Activated CD4-positive, alpha-beta T cell treated with anti-CD3 and anti-CD28 coated beads for 36 hours (primary cell): ENCODE measurements at regions of chrX and their contacts with region 1.

Region 1: GRCh38 chrX:14029425-14030173 is at the start of gene GEMIN8:
- DNase-seq: peak; percentile 90
- ATAC-seq: peak; percentile 75
- H3K4me3 Mint-ChIP-seq: peak within 1 kb of the TSS; percentile 87
- H3K27ac Mint-ChIP-seq: peak within 1 kb of the TSS; percentile 100
- H3K4me1 Mint-ChIP-seq: peaks cover 40% of the 10 kb centered on the region
- H3K27me3 Mint-ChIP-seq: peaks cover 2% of the 10 kb centered on the region
- total RNA-seq, gene GEMIN8: 14.9 to 15.6 TPM

Region 2: GRCh38 chrX:12984629-12985319 is 1044.8 kb before region 1 on chrX:
- CTCF ChIA-PET with region 1: no interaction called
- POLR2A ChIA-PET with region 1: no interaction called
- intact Hi-C with region 1: loop called in 1 of 2 experiments (anchors 10 kb)
- DNase-seq: peak; percentile 65
- ATAC-seq: peak; percentile 84
- H3K4me3 Mint-ChIP-seq: peak overlapping the region; percentile 28
- H3K27ac Mint-ChIP-seq: peak overlapping the region; percentile 89
- H3K4me1 Mint-ChIP-seq: peaks cover 70% of the 10 kb centered on the region
- H3K27me3 Mint-ChIP-seq: no peaks in the 10 kb centered on the region

Region 3: GRCh38 chrX:13581554-13581953 is 448.0 kb before region 1 on chrX:
- CTCF ChIA-PET with region 1: no interaction called
- POLR2A ChIA-PET with region 1: no interaction called
- intact Hi-C with region 1: no loop called
- DNase-seq: no peak
- ATAC-seq: no peak
- H3K4me3 Mint-ChIP-seq: no peak overlapping the region
- H3K27ac Mint-ChIP-seq: no peak overlapping the region
- H3K4me1 Mint-ChIP-seq: no peaks in the 10 kb centered on the region
- H3K27me3 Mint-ChIP-seq: peaks cover 15% of the 10 kb centered on the region

Region 4: GRCh38 chrX:13658602-13659001 is 371.0 kb before region 1 on chrX:
- CTCF ChIA-PET with region 1: interaction called, 3 read pairs
- POLR2A ChIA-PET with region 1: no interaction called
- intact Hi-C with region 1: loop called (anchors 1 to 2 kb)
- DNase-seq: no peak
- ATAC-seq: no peak
- H3K4me3 Mint-ChIP-seq: no peak overlapping the region
- H3K27ac Mint-ChIP-seq: no peak overlapping the region
- H3K4me1 Mint-ChIP-seq: peaks cover 36% of the 10 kb centered on the region
- H3K27me3 Mint-ChIP-seq: no peaks in the 10 kb centered on the region

Region 5: DNA sequence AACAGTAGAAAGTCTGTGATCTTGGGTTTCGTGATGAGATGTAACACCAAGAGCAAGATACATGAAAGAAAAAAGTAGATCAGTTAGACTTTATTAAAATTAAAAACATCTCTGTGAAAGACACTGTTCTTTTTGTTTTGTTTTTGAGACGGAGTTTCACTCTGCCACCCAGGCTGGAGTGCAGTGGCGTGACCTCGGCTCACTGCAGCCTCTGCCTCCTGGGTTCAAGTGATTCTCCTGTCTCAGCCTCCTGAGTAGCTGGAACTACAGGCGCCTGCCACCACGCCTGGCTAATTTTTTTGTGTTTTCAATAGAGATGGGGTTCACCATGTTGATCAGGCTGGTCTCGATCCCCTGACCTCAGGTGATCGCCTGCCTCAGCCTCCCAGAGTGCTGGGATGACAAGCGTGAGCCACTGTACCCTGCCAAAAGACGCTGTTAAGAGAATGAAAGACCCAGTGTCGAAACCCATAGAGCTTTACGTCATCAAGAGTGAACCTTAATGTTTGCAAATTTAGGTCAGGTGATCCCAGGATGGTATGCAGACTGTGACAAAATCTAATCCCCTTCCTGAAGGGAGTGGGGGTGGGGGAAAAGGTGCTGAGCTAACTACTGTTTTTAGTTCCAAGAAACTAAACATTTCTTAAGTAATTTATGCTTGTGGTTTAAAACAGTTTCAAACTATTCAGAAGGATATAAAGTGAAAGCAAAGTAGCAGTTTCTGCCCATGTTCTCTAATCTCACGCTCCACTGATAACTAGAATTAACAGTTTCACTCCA is 287.0 kb before region 1 on chrX:
- CTCF ChIA-PET with region 1: interaction called, 4 read pairs
- POLR2A ChIA-PET with region 1: no interaction called
- intact Hi-C with region 1: loop called in 1 of 2 experiments (anchors 2 kb)
- DNase-seq: peak; percentile 69
- ATAC-seq: peak; percentile 93
- H3K4me3 Mint-ChIP-seq: peak overlapping the region; percentile 43
- H3K27ac Mint-ChIP-seq: peak overlapping the region; percentile 34
- H3K4me1 Mint-ChIP-seq: peaks cover 18% of the 10 kb centered on the region
- H3K27me3 Mint-ChIP-seq: no peaks in the 10 kb centered on the region

Region 6: DNA sequence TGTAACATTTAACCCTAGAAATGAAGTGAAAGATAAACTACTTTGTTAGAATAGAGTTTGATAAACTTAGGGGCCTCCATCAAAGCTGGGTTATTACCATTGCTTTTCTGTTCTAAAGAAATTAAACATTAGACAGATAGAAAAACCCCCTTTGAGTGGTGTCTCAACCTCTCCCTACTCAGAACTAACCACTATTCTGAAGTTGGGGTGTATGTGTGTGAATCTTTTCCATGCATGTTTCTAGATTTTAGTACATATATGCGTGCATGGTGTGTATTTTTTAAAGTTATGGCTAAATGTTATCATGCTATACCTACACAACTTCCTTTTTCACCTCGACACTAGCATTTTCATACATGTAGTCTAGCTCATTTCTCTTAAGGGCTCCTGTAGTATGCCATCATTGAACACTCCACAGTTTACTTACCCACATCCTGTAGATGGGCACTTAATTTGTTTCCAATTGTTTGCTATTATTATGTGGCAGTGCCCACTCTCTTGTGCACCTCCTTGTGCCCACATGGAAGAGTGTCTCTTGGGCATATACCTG is 25.6 kb before region 1 on chrX:
- CTCF ChIA-PET with region 1: no interaction called
- POLR2A ChIA-PET with region 1: interaction called, 3 read pairs
- intact Hi-C with region 1: loop called in 1 of 2 experiments (anchors 1 kb)
- DNase-seq: no peak
- ATAC-seq: peak; percentile 84
- H3K4me3 Mint-ChIP-seq: no peak overlapping the region
- H3K27ac Mint-ChIP-seq: no peak overlapping the region
- H3K4me1 Mint-ChIP-seq: peaks cover 15% of the 10 kb centered on the region
- H3K27me3 Mint-ChIP-seq: no peaks in the 10 kb centered on the region

Region 7: GRCh38 chrX:15335135-15336022 is 1305.8 kb after region 1 on chrX and contains the start of gene PIGA:
- CTCF ChIA-PET with region 1: no interaction called
- POLR2A ChIA-PET with region 1: no interaction called
- intact Hi-C with region 1: loop called (anchors 2 to 10 kb)
- DNase-seq: peak; percentile 94
- ATAC-seq: peak; percentile 97
- H3K4me3 Mint-ChIP-seq: peak within 1 kb of the TSS; percentile 84
- H3K27ac Mint-ChIP-seq: peak within 1 kb of the TSS; percentile 91
- H3K4me1 Mint-ChIP-seq: peaks cover 14% of the 10 kb centered on the region
- H3K27me3 Mint-ChIP-seq: peaks cover 4% of the 10 kb centered on the region
- total RNA-seq, gene PIGA: 37.2 to 37.9 TPM